ENCODE measurements at regions of chr15 and their contacts with region 1.

Region 1: GRCh38 chr15:77046704-77047412 is 24.1 kb downstream of the TSPAN3 start:
- DNase-seq: no peak
- H3K4me3 Mint-ChIP-seq: no peak overlapping the region
- H3K27ac Mint-ChIP-seq: peak overlapping the region; percentile 4
- H3K4me1 Mint-ChIP-seq: peaks cover 3% of the 10 kb centered on the region
- H3K27me3 Mint-ChIP-seq: no peaks in the 10 kb centered on the region

Region 2: DNA sequence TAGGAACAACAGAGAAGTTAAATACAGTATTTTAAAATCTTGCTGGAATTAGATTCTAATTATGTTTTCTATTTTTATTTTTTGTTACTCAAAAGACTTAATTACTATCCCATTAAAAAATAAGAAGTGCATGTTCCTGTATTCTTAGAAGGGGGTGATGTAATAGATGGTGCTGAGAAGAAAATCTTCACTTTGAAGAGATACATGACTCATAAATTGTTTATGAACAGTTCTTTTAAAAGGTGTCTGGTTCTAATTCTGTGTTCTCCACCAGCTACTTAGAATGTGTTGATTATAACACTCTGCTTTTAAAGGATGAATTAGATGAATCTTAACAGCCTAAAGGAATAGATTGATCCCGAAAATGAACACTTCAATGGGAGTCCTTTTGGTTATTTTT is 107.1 kb before region 1 on chr15:
- CTCF ChIA-PET with region 1: no interaction called
- intact Hi-C with region 1: no loop called
- DNase-seq: no peak
- H3K4me3 Mint-ChIP-seq: no peak overlapping the region
- H3K27ac Mint-ChIP-seq: peak overlapping the region; percentile 59
- H3K4me1 Mint-ChIP-seq: peaks cover 13% of the 10 kb centered on the region
- H3K27me3 Mint-ChIP-seq: no peaks in the 10 kb centered on the region

Region 3: DNA sequence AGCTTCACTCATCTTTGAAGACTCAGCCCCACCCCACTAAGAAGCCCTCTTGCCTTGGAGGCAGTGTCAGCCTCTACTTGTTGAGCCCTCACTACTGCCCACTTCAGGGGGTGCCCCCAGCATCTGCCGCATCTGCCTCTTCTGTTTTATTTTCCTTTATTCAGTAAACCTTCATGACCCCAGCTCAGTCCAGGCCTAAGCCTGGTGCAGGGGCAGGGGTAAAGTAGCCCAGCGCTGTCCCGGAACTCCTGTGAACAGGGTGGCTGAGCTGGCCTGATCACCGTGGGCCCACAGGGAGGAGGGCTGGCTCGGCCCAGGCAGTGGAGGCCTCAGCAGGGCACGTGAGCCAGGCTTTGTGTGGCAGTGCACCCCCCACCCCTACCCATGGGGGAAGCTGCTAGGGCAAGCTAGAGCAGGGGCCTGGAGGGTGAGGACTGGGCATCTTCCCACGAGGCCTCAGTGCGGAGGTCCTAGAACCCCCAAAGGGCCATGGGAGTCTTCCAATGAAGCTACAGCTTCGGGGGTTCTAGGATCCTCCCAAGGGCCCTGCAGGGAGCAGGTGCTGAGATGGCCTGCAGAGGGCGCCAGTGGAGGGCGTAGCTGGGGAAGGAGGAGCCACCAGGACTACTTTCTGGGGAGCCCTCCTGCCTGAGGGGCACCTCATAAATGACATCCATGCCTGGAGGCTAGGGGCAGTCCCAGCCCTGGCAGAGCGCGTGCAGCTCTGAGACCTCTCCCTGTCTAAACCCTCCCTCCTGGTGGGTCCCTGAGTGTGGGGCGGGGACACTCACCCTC is 12.0 kb before region 1 on chr15:
- CTCF ChIA-PET with region 1: interaction called, 10 read pairs
- intact Hi-C with region 1: no loop called
- DNase-seq: peak; percentile 65
- H3K4me3 Mint-ChIP-seq: no peak overlapping the region
- H3K27ac Mint-ChIP-seq: peak overlapping the region; percentile 65
- H3K4me1 Mint-ChIP-seq: no peaks in the 10 kb centered on the region
- H3K27me3 Mint-ChIP-seq: no peaks in the 10 kb centered on the region

Region 4: DNA sequence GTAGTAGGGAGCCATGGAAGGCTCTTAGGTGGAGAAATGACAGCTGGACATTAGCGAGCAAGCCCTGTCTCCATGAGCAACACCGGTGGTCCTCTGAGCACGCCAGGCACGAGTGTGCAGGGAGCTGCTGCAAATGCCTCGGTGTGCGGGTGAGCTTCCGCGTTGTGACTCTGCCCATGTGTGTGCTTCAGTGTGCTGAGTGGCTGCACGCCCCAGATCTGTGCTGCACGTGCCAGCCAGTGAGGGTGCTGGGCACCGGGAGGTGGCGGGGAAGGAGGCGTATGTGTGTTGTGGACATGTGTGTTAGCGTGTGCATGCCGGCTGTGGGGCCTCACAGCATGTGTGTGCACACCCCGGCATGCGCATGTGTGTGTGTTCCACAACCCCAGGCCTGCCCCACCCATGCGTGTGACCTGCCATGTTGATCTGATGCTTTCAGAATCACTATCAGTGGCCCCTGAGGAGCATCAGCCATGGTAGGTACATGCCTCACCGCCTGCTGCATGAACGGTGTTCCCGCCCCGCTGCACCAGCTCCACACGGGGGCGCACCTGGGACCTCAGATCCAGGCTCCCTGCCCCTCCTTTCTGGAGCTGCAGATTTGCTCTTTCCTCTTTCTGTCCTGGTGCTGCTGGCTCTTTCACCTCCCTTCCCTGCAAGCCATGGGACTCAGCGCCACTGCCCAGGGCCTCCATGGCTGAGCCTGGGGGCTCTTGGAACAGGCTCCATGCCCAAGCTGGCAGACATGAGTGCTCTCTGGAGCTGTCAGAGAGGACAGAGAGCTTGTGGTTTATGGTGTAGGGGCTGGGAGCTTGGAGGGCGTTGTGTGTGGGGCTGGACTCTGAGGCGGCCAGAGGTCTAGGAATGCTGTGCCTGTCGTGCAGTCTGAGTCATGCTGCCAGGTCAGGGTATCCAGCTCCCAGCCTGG is 861.2 kb after region 1 on chr15:
- CTCF ChIA-PET with region 1: no interaction called
- intact Hi-C with region 1: no loop called
- DNase-seq: peak; percentile 81
- H3K4me3 Mint-ChIP-seq: no peak overlapping the region
- H3K27ac Mint-ChIP-seq: no peak overlapping the region
- H3K4me1 Mint-ChIP-seq: peaks cover 2% of the 10 kb centered on the region
- H3K27me3 Mint-ChIP-seq: no peaks in the 10 kb centered on the region

Measured in activated naive CD4-positive, alpha-beta T cell treated with anti-CD3 and anti-CD28 coated beads for 36 hours (primary cell).